BJ (cell line): ENCODE measurements at regions of chr6 and their contacts with region 1.

Region 1: GRCh38 chr6:51959744-51960383 is 127.5 kb downstream of the PKHD1 start:
- DNase-seq: peak; percentile 5
- H3K4me3 ChIP-seq: no peak overlapping the region
- H3K27me3 ChIP-seq: no peaks in the 10 kb centered on the region
- CTCF ChIP-seq: peak; percentile 83

Region 2: GRCh38 chr6:51949468-51949867 is 10.4 kb before region 1 on chr6:
- CTCF ChIA-PET with region 1: interaction called, 14 read pairs
- POLR2A ChIA-PET with region 1: no interaction called
- DNase-seq: no peak
- H3K4me3 ChIP-seq: no peak overlapping the region
- H3K27me3 ChIP-seq: no peaks in the 10 kb centered on the region
- CTCF ChIP-seq: no peak